Posterior vena cava (tissue), 2 donors: ENCODE measurements at regions of chr1 and their contacts with region 1.

Region 1: DNA sequence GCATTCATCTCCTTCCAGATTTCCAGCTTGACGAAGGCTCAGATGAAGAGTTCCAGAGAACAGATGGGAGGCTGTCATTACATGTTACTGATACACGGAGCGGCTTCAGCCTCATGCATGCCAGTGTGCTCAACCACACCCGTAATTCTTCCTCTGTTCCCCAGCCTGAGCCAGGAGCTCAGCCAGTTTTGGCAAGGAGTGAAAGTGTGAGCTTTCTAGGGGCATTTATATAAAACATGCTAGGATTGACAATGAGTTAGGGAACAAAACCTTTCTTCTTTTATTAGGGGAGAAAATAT is 290.4 kb upstream of the PLXNA2 start:
- DNase-seq: no peak

Region 2: GRCh38 chr1:209590405-209590804 is 1055.9 kb after region 1 on chr1:
- intact Hi-C with region 1: loop called in 1 of 2 experiments (anchors 5 kb)
- DNase-seq: no peak